ENCODE measurements at regions of chr5 and their contacts with region 1.

Region 1: GRCh38 chr5:149063017-149063687 is at the start of gene SH3TC2:
- DNase-seq: peak; percentile 81 to 90
- H3K4me3 ChIP-seq: peak within 1 kb of the TSS; percentile 46; the same call in 1 of the 2 replicates
- H3K27ac ChIP-seq: peak within 1 kb of the TSS; percentile 99
- H3K4me1 ChIP-seq: peaks cover 68% of the 10 kb centered on the region
- H3K27me3 ChIP-seq: no peaks in the 10 kb centered on the region
- CTCF ChIP-seq: no peak
- total RNA-seq, gene SH3TC2: 32.1 and 38.8 TPM in 2 replicates

Region 2: DNA sequence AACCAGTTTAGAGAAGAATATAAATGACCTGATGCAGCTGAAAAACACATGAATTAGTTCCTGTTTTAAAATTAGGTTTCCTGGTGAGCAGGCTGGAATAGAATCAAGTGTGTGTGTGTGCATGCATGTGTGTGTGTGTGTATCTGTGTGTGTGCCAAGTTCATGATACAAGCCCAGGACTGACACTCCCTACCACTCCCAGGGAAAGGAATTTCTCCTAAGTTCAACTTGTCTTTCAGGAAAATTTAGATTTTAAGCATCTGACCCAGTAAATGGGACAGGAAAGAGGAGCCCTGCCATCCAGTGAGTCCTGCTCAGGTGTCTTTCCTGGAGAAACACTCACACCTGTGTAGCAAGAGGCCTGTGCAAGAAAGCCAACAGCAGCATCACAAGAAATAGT is 11.0 kb after region 1 on chr5:
- CTCF ChIA-PET with region 1: interaction called, 3 read pairs
- POLR2A ChIA-PET with region 1: no interaction called
- intact Hi-C with region 1: loop called (anchors 1 kb)
- DNase-seq: peak; percentile 57 to 76
- H3K4me3 ChIP-seq: no peak overlapping the region
- H3K27ac ChIP-seq: peak overlapping the region; percentile 79
- H3K4me1 ChIP-seq: peaks cover 47% of the 10 kb centered on the region
- H3K27me3 ChIP-seq: no peaks in the 10 kb centered on the region
- CTCF ChIP-seq: no peak

Region 3: DNA sequence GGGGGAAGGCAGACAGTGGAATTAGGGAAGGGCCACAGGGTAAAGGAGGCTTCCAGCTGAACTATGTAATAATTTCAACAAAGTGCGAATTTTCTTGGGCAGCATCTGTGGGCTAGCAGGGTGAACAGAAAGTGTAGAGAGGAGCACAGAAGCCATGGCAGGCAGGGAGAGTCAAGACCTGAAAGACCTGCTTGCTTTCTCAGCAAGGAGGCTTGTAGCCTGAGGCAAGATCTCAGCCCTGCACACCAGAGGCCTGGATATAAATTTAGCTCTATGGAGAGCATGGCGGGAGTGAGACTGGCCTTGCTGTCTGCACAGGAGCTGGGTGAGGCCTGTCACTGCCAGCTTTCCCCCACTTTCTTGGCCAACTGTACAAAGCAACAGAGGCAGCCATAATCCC is 31.8 kb after region 1 on chr5:
- CTCF ChIA-PET with region 1: no interaction called
- POLR2A ChIA-PET with region 1: no interaction called
- intact Hi-C with region 1: loop called (anchors 2 kb)
- DNase-seq: peak; percentile 57 to 72
- H3K4me3 ChIP-seq: no peak overlapping the region
- H3K27ac ChIP-seq: peak overlapping the region; percentile 15; the same call in 1 of the 2 replicates
- H3K4me1 ChIP-seq: peaks cover 15% of the 10 kb centered on the region; the same call in 1 of the 2 replicates
- H3K27me3 ChIP-seq: no peaks in the 10 kb centered on the region
- CTCF ChIP-seq: no peak

Region 4: GRCh38 chr5:149205625-149206523 is 142.7 kb after region 1 on chr5:
- CTCF ChIA-PET with region 1: no interaction called
- POLR2A ChIA-PET with region 1: no interaction called
- intact Hi-C with region 1: loop called (anchors 5 kb)
- DNase-seq: peak; percentile 49 to 78
- H3K4me3 ChIP-seq: no peak overlapping the region
- H3K27ac ChIP-seq: peak overlapping the region; percentile 14; the same call in 1 of the 2 replicates
- H3K4me1 ChIP-seq: peaks cover 9% of the 10 kb centered on the region; the same call in 1 of the 2 replicates
- H3K27me3 ChIP-seq: no peaks in the 10 kb centered on the region
- CTCF ChIP-seq: no peak

Region 5: DNA sequence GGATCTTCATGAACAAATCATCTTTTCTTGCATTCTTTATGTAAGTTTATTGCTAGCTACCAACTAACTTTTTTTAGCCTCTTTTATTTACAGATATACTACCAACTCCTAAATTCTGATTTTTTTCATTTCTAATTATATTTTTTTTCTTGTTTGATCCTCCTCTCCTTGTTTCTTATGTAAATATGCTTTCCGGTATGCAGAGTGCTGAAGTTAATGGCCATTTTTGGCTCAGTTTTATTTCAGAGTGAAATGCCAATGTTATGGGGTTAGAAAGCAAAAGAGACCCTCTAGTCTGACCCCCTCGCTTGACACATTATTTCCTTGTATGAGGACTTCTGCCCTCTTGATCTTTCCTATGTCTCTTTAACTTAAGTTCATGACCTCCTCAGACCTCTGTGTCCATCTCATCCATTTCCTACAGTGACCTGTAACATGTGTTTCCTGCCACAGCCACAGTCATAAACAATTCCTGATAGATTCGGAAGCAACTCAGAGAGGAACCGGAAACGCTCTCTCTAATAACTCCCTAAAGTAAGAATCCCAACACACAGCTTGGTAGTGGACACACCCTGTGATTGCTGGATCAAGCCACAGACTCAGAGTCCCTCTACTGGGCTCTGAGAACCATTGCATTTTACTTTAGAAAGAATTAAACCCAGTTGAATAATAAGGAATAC is 165.6 kb after region 1 on chr5:
- CTCF ChIA-PET with region 1: no interaction called
- POLR2A ChIA-PET with region 1: no interaction called
- intact Hi-C with region 1: loop called (anchors 1 kb)
- DNase-seq: peak; percentile 40 to 53
- H3K4me3 ChIP-seq: no peak overlapping the region
- H3K27ac ChIP-seq: no peak overlapping the region
- H3K4me1 ChIP-seq: peaks cover 18% of the 10 kb centered on the region
- H3K27me3 ChIP-seq: no peaks in the 10 kb centered on the region
- CTCF ChIP-seq: peak; percentile 68